ENCODE measurements at regions of chr7 and their contacts with region 1.

Region 1: GRCh38 chr7:4753711-4754432 is 21.6 kb upstream of the AP5Z1 start:
- DNase-seq: peak; percentile 81 to 91
- ATAC-seq: peak; percentile 92 to 98 (median 96)
- H3K4me3 ChIP-seq: no peak overlapping the region
- H3K4me3 Mint-ChIP-seq: no peak overlapping the region
- H3K27ac ChIP-seq: no peak overlapping the region
- H3K27ac Mint-ChIP-seq: peak overlapping the region in 1 of 2 donors; percentile 21
- H3K4me1 ChIP-seq: peaks cover 14% of the 10 kb centered on the region
- H3K4me1 Mint-ChIP-seq: peaks cover 5 to 12% of the 10 kb centered on the region in 2 donors
- H3K27me3 ChIP-seq: no peaks in the 10 kb centered on the region
- H3K27me3 Mint-ChIP-seq: no peaks in the 10 kb centered on the region
- CTCF ChIP-seq: peak; percentile 94

Region 2: GRCh38 chr7:4115941-4116610 is 637.8 kb before region 1 on chr7:
- intact Hi-C with region 1: no loop called
- DNase-seq: no peak
- ATAC-seq: no peak
- H3K4me3 ChIP-seq: no peak overlapping the region
- H3K4me3 Mint-ChIP-seq: no peak overlapping the region
- H3K27ac ChIP-seq: no peak overlapping the region
- H3K27ac Mint-ChIP-seq: no peak overlapping the region
- H3K4me1 ChIP-seq: no peaks in the 10 kb centered on the region
- H3K4me1 Mint-ChIP-seq: no peaks in the 10 kb centered on the region
- H3K27me3 ChIP-seq: no peaks in the 10 kb centered on the region
- H3K27me3 Mint-ChIP-seq: no peaks in the 10 kb centered on the region
- CTCF ChIP-seq: no peak

Region 3: GRCh38 chr7:4610768-4611467 is 143.0 kb before region 1 on chr7:
- intact Hi-C with region 1: loop called (anchors 1 kb)
- DNase-seq: peak; percentile 25 to 84
- ATAC-seq: peak; percentile 71 to 89 (median 86)
- H3K4me3 ChIP-seq: no peak overlapping the region
- H3K4me3 Mint-ChIP-seq: no peak overlapping the region
- H3K27ac ChIP-seq: no peak overlapping the region
- H3K27ac Mint-ChIP-seq: no peak overlapping the region
- H3K4me1 ChIP-seq: peaks cover 13% of the 10 kb centered on the region
- H3K4me1 Mint-ChIP-seq: peaks cover 6 to 14% of the 10 kb centered on the region in 2 donors
- H3K27me3 ChIP-seq: no peaks in the 10 kb centered on the region
- H3K27me3 Mint-ChIP-seq: peaks cover 0 to 3% of the 10 kb centered on the region in 2 donors
- CTCF ChIP-seq: peak; percentile 77

Region 4: GRCh38 chr7:4706384-4707216 is 47.3 kb before region 1 on chr7:
- intact Hi-C with region 1: no loop called
- DNase-seq: no peak
- ATAC-seq: no peak
- H3K4me3 ChIP-seq: no peak overlapping the region
- H3K4me3 Mint-ChIP-seq: no peak overlapping the region
- H3K27ac ChIP-seq: no peak overlapping the region
- H3K27ac Mint-ChIP-seq: no peak overlapping the region
- H3K4me1 ChIP-seq: peaks cover 18% of the 10 kb centered on the region
- H3K4me1 Mint-ChIP-seq: peaks cover 26 to 45% of the 10 kb centered on the region in 2 donors
- H3K27me3 ChIP-seq: no peaks in the 10 kb centered on the region
- H3K27me3 Mint-ChIP-seq: no peaks in the 10 kb centered on the region
- CTCF ChIP-seq: no peak

Measured in natural killer cell (primary cell).